Activated naive CD4-positive, alpha-beta T cell treated with anti-CD3 and anti-CD28 coated beads for 36 hours (primary cell): ENCODE measurements at regions of chr18 and their contacts with region 1.

Region 1: GRCh38 chr18:63253428-63254372 is 65.9 kb downstream of the BCL2 start:
- DNase-seq: no peak
- H3K4me3 Mint-ChIP-seq: no peak overlapping the region
- H3K27ac Mint-ChIP-seq: peak overlapping the region; percentile 53
- H3K4me1 Mint-ChIP-seq: peaks cover 71% of the 10 kb centered on the region
- H3K27me3 Mint-ChIP-seq: no peaks in the 10 kb centered on the region

Region 2: DNA sequence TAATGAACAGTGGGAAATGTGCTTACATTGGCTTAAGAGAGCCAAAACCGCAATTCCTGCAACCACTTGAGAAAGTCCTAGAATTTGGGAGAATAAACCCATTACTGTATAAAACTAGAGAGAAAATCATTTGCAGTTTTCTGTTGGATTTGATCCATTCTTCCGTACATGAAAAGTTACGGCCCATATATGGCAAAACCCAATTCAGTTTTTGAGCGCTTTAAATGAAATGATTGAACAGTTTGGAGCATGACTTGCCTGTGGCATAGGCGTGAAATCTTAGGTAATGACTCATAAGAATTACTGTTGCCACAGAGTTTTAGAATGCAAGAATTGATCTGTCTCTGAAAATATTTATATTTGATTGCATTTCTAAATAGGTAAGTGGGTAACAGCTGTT is 486.4 kb before region 1 on chr18:
- CTCF ChIA-PET with region 1: no interaction called
- intact Hi-C with region 1: no loop called
- DNase-seq: no peak
- H3K4me3 Mint-ChIP-seq: no peak overlapping the region
- H3K27ac Mint-ChIP-seq: no peak overlapping the region
- H3K4me1 Mint-ChIP-seq: peaks cover 17% of the 10 kb centered on the region
- H3K27me3 Mint-ChIP-seq: no peaks in the 10 kb centered on the region

Region 3: GRCh38 chr18:63098018-63098981 is 155.4 kb before region 1 on chr18:
- CTCF ChIA-PET with region 1: no interaction called
- intact Hi-C with region 1: no loop called
- DNase-seq: peak; percentile 77
- H3K4me3 Mint-ChIP-seq: no peak overlapping the region
- H3K27ac Mint-ChIP-seq: peak overlapping the region; percentile 11
- H3K4me1 Mint-ChIP-seq: peaks cover 49% of the 10 kb centered on the region
- H3K27me3 Mint-ChIP-seq: no peaks in the 10 kb centered on the region

Region 4: DNA sequence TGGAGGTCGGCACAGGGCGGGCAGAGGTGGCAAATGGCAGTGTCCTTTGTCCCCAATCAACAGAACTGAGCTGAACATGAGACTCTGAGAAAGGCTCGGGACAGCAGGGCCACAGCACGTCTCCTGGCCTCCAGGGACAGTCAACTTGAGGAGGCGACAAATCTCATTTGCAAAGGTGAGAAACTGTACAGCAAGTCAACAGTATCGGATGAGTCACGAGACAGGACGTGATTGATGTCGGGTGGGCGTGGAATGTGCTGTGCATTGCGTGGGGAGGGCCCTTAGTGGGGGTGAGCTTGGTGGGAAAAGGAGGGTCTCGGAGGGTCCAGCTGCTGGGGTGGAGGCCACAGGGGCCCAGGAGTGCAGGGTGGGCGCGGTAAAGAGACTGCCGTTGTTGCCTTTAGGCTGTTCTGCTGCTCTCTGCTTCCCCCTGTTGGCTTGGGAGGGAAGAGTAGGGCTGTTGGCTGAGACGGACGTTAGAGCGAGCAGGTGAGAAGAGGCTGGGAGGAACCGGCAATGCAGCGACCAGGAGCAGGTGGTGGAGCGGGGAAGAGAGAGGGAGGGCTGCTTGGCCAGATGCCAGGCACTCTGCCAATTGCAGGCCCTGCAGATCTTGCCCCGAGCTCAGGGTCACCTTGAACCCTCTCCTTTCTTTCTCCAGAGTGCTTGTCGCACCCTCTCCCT is 98.4 kb before region 1 on chr18:
- CTCF ChIA-PET with region 1: no interaction called
- intact Hi-C with region 1: no loop called
- DNase-seq: peak; percentile 93
- H3K4me3 Mint-ChIP-seq: peak overlapping the region; percentile 79
- H3K27ac Mint-ChIP-seq: peak overlapping the region; percentile 99
- H3K4me1 Mint-ChIP-seq: peaks cover 97% of the 10 kb centered on the region
- H3K27me3 Mint-ChIP-seq: no peaks in the 10 kb centered on the region

Region 5: DNA sequence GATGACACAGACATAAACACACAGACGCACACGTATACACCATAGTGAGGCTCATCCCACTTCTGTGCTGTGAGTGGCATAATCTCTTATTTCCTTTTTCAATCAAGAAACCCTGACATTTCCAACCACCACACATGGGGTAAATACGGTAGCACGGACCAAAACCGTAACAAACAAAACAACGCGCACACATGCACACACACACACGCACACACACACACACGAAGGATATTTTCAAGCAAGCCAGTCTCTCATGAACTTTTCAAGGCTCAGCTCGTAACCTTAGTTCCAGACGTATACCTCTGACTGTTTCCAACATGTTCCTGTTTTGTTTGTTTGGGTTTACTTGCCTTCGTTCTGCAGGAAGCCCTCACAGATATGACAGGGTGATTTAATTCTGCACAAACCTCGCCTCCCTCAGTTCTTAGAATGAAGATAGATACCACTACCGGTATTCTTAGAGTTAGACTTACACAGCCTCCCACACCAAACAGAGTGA is 53.9 kb before region 1 on chr18:
- CTCF ChIA-PET with region 1: no interaction called
- intact Hi-C with region 1: no loop called
- DNase-seq: peak; percentile 54
- H3K4me3 Mint-ChIP-seq: no peak overlapping the region
- H3K27ac Mint-ChIP-seq: no peak overlapping the region
- H3K4me1 Mint-ChIP-seq: peaks cover 30% of the 10 kb centered on the region
- H3K27me3 Mint-ChIP-seq: no peaks in the 10 kb centered on the region

Region 6: GRCh38 chr18:63237881-63238667 is 15.6 kb before region 1 on chr18:
- CTCF ChIA-PET with region 1: interaction called, 3 read pairs
- intact Hi-C with region 1: loop called (anchors 2 kb)
- DNase-seq: no peak
- H3K4me3 Mint-ChIP-seq: no peak overlapping the region
- H3K27ac Mint-ChIP-seq: no peak overlapping the region
- H3K4me1 Mint-ChIP-seq: peaks cover 62% of the 10 kb centered on the region
- H3K27me3 Mint-ChIP-seq: no peaks in the 10 kb centered on the region

Region 7: DNA sequence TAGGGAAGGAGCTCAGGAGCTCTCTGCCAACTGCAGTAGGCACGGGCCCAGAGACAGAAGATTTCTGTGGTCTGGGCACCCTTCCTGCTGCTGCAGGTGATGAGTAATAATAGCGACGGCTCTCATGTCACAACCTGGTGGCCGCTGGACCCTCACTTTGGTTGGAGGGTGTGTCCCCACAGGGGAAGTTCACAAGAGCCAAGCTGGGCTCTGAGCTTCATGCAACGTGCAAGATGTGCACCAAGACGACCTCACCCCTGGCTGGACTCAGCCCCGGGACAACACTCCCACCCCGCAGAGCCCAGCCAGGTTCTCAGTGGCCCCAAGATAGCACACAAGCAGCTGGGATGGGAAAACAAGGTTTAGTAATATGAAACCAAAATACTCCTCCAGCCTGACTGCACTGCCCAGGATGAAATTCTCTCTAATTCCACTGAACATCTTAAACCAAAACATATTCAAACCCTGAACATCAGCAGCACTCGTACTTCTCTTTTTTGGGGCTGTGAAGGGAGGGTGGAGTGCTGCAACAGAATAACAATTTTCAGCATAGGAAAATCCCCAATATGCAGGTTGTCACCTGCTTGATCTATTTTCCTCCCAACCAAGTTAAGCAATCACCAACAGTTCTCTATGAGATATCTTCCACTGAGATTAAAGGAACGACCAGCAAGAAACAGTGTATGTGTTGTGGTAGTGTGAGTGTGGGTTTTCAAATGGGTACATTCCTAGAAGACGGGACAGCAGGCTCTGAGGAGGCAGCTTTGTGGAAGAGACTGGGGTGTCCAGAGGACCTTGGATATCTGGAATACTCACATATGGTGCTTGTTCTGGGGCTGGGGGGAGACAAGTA is 39.4 kb after region 1 on chr18:
- CTCF ChIA-PET with region 1: no interaction called
- intact Hi-C with region 1: loop called (anchors 5 kb)
- DNase-seq: peak; percentile 41
- H3K4me3 Mint-ChIP-seq: peak overlapping the region; percentile 12
- H3K27ac Mint-ChIP-seq: peak overlapping the region; percentile 55
- H3K4me1 Mint-ChIP-seq: peaks cover 10% of the 10 kb centered on the region
- H3K27me3 Mint-ChIP-seq: no peaks in the 10 kb centered on the region

Region 8: GRCh38 chr18:63299837-63300745 is 46.4 kb after region 1 on chr18:
- CTCF ChIA-PET with region 1: no interaction called
- intact Hi-C with region 1: loop called (anchors 2 kb)
- DNase-seq: peak; percentile 72
- H3K4me3 Mint-ChIP-seq: peak overlapping the region; percentile 17
- H3K27ac Mint-ChIP-seq: peak overlapping the region; percentile 86
- H3K4me1 Mint-ChIP-seq: peaks cover 73% of the 10 kb centered on the region
- H3K27me3 Mint-ChIP-seq: no peaks in the 10 kb centered on the region